ENCODE measurements at regions of chr5 and their contacts with region 1.

Region 1: DNA sequence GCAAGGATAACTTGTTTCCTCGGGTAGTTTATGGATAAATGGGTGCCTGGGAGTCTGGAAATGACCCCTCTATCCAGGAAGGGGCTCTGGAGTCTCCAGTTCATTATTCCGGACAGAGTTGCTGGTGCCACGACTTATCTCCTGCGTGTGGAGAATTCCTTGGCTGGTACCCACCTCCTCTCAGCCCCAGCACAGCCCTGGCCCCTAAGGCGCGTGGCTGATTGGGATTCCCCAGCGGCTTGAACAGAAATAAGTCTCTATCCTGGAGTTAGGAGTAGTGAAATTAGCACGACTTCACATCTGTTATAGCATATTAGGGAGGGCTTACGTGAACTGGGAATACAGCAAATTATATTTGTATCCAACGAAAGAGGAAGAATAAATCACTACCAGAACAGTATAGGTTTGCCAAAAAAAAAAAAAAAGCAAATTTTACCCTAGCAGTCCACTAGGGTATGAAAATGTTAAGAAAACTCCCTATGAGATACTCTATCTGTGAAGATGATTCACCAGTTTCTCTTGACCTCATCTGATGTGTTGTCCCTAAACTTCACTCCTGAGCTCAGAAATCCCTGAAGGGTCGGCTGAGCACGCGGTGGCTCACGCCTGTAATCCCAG is 172.5 kb upstream of the OTULINL start:
- DNase-seq: no peak
- ATAC-seq: no peak
- H3K4me3 Mint-ChIP-seq: no peak overlapping the region
- H3K27ac Mint-ChIP-seq: no peak overlapping the region
- H3K4me1 Mint-ChIP-seq: peaks cover 14% of the 10 kb centered on the region
- H3K27me3 Mint-ChIP-seq: no peaks in the 10 kb centered on the region

Region 2: GRCh38 chr5:14595189-14595588 is 186.1 kb after region 1 on chr5:
- CTCF ChIA-PET with region 1: no interaction called
- POLR2A ChIA-PET with region 1: no interaction called
- intact Hi-C with region 1: loop called (anchors 2 to 5 kb)
- DNase-seq: peak; percentile 52
- ATAC-seq: peak; percentile 71
- H3K4me3 Mint-ChIP-seq: peak overlapping the region; percentile 66
- H3K27ac Mint-ChIP-seq: peak overlapping the region; percentile 96
- H3K4me1 Mint-ChIP-seq: peaks cover 85% of the 10 kb centered on the region
- H3K27me3 Mint-ChIP-seq: no peaks in the 10 kb centered on the region

Region 3: DNA sequence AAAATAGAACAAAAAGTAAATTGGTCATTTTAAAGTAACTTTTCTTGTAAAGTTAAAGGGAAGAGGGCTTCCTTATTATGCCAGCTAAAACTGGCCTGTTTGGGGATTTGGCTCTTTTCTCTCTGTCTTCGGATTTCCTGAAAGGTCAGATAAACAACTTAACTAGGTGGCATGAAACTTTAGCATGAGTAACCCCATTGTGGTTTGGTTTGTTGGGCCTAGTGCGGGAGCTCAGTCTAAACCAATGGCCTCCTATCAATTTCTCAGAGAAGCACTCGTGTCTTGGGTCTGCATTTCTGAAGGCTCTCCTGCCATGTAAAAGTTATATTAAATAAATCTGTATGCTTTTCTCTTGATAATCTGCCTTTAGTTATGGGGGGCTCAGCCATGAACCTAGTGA is 511.0 kb after region 1 on chr5:
- CTCF ChIA-PET with region 1: no interaction called
- POLR2A ChIA-PET with region 1: no interaction called
- intact Hi-C with region 1: loop called in 1 of 2 experiments (anchors 5 kb)
- DNase-seq: no peak
- ATAC-seq: peak; percentile 50
- H3K4me3 Mint-ChIP-seq: no peak overlapping the region
- H3K27ac Mint-ChIP-seq: peak overlapping the region; percentile 77
- H3K4me1 Mint-ChIP-seq: peaks cover 46% of the 10 kb centered on the region
- H3K27me3 Mint-ChIP-seq: no peaks in the 10 kb centered on the region